Heart right ventricle (tissue), 16 donors: ENCODE measurements at regions of chr6 and their contacts with region 1.

Region 1: GRCh38 chr6:35064757-35065440 is 76.2 kb downstream of the TCP11 start:
- DNase-seq: no peak
- ATAC-seq: peak in 5 of 8 donors; percentile 3 to 44 (median 35)
- H3K4me3 ChIP-seq: no peak overlapping the region
- H3K27ac ChIP-seq: peak overlapping the region; percentile 6 to 80 (median 66)
- H3K4me1 ChIP-seq: peaks cover 18 to 56% (median 39%) of the 10 kb centered on the region in 9 donors
- H3K27me3 ChIP-seq: no peaks in the 10 kb centered on the region
- CTCF ChIP-seq: peak in 3 of 9 donors; percentile 11 to 22 (median 18)

Region 2: DNA sequence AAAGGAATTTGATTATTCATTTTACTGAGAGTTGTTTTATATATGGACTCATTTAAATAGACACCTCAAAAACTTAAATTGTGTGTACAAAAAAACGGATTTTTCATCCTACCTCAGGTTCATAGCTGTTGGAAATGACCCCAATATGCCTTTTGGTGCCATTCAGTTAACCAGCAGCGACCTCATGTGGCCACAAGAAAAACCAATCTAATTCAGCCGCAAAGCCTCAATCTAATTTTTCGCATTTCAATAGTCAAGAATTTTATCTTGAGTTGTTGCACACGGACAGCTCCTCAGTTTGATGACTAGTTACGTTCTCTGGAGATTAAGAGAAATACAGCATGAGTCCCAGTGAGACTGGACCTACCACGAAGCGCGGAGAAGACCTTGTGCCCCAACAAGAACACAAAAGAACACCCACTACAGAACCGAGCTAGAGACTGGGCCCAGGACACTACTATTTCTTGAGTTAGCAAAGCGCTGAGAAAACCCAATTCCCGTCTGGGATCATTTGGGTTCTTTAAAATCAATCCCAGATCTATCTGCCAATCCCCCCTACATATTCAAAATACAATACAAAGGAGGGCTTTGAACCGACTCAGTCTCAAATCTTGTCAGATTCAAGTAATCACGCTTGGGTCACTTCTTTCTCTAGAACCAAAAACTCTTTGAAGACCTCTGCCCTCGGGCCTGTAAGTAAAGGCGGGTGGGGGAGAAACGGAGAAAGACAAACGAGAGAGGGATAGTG is 75.2 kb after region 1 on chr6:
- intact Hi-C with region 1: loop called in 1 of 10 experiments (anchors 10 kb)
- DNase-seq: peak in 1 of 2 donors; percentile 55
- ATAC-seq: peak in 6 of 8 donors; percentile 38 to 76 (median 63)
- H3K4me3 ChIP-seq: no peak overlapping the region
- H3K27ac ChIP-seq: no peak overlapping the region
- H3K4me1 ChIP-seq: peaks cover 0 to 26% (median 10%) of the 10 kb centered on the region in 9 donors
- H3K27me3 ChIP-seq: peaks cover 0 to 15% (median 0%) of the 10 kb centered on the region in 7 donors
- CTCF ChIP-seq: peak; percentile 63 to 92 (median 85)

Region 3: DNA sequence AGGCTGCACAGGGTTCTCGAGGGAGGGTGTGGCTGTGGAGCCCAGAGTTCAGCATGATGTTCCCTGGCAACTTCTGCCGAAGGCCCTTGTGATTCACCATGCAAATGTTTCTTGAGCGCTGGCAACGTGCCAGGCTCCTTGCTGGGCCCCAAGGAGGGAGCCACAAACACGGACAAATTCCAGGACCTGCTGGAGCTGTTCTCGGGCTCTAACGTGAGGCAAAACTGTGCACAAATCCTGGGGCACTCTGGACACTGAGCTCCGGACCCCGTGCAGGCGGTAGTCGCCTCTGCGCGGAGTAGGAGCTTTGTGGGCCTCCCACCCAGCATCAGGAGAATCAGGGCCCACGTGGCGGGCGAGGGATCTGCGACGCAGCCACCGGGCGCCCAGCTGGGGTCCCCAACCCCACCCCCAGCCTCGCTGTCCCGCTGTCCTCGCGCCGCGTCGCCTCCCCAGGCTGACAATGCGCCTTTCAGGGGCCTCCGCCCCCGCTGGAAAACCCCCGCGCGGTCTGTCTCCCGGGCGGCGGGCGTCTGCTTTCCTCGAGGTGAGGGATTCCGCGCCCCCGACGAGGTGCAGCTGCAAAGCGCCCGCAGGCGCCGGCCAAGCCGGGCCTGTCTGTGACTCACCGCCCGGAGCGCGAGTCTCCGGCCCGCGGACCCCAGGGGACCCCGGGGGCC is 117.2 kb after region 1 on chr6:
- intact Hi-C with region 1: no loop called
- DNase-seq: peak in 1 of 2 donors; percentile 60
- ATAC-seq: peak in 5 of 8 donors; percentile 29 to 66 (median 47)
- H3K4me3 ChIP-seq: no peak overlapping the region
- H3K27ac ChIP-seq: peak overlapping the region in 9 of 10 donors; percentile 4 to 73 (median 39)
- H3K4me1 ChIP-seq: peaks cover 5 to 66% (median 42%) of the 10 kb centered on the region in 9 donors
- H3K27me3 ChIP-seq: peaks cover 0 to 16% (median 0%) of the 10 kb centered on the region in 7 donors
- CTCF ChIP-seq: no peak